Heart left ventricle (tissue), 16 donors: ENCODE measurements at regions of chr2 and their contacts with region 1.

Region 1: GRCh38 chr2:69724540-69725159 is 17.3 kb upstream of the ANXA4 start:
- DNase-seq: peak; percentile 67 to 85 (median 84)
- ATAC-seq: peak; percentile 63 to 92 (median 86)
- H3K4me3 ChIP-seq: peak overlapping the region in 10 of 12 donors; percentile 9 to 54 (median 32)
- H3K27ac ChIP-seq: no peak overlapping the region
- H3K4me1 ChIP-seq: peaks cover 0 to 13% (median 0%) of the 10 kb centered on the region in 12 donors
- H3K27me3 ChIP-seq: no peaks in the 10 kb centered on the region
- CTCF ChIP-seq: peak; percentile 93 to 99 (median 94)
- POLR2A ChIP-seq: no peak

Region 2: DNA sequence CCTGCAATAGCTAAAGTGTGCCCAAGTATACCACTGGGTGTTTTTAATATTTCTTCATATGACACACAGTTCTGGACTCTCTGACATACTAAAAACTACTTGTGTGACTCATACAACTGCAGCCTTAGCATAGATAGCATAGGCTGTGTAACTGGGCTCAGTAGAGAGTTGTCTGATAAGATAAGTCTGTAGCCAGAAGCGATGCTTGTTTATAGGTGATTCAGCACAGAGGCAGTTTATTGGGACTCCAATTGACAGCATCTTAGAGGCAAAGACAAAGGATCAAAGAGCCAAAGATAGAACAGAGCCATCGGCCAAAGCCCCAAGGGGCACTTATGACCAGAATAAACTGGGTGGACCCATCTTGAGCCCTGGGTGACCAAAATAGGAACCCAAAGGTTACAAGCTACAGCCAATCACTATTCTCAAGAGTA is 123.5 kb before region 1 on chr2:
- intact Hi-C with region 1: no loop called
- DNase-seq: no peak
- ATAC-seq: peak; percentile 53 to 93 (median 72)
- H3K4me3 ChIP-seq: no peak overlapping the region
- H3K27ac ChIP-seq: peak overlapping the region in 10 of 12 donors; percentile 8 to 67 (median 50)
- H3K4me1 ChIP-seq: peaks cover 3 to 75% (median 30%) of the 10 kb centered on the region in 12 donors
- H3K27me3 ChIP-seq: no peaks in the 10 kb centered on the region
- CTCF ChIP-seq: no peak
- POLR2A ChIP-seq: no peak

Region 3: GRCh38 chr2:69893684-69894551 is 169.3 kb after region 1 on chr2 and contains the start of gene SNRNP27:
- intact Hi-C with region 1: loop called in 1 of 10 experiments (anchors 10 kb)
- DNase-seq: peak; percentile 73 to 88 (median 81)
- ATAC-seq: peak; percentile 87 to 94 (median 91)
- H3K4me3 ChIP-seq: peak within 1 kb of the TSS; percentile 56 to 93 (median 80)
- H3K27ac ChIP-seq: peak within 1 kb of the TSS in 11 of 12 donors; percentile 66 to 91 (median 80)
- H3K4me1 ChIP-seq: peaks cover 0 to 29% (median 15%) of the 10 kb centered on the region in 12 donors
- H3K27me3 ChIP-seq: no peaks in the 10 kb centered on the region
- CTCF ChIP-seq: peak in 1 of 12 donors; percentile 11
- POLR2A ChIP-seq: peak in 1 of 2 donors; percentile 46
- total RNA-seq, gene SNRNP27: 48.4 to 75.4 (median 55.0) TPM